Naive thymus-derived CD4-positive, alpha-beta T cell (primary cell): ENCODE measurements at regions of chr4 and their contacts with region 1.

Region 1: DNA sequence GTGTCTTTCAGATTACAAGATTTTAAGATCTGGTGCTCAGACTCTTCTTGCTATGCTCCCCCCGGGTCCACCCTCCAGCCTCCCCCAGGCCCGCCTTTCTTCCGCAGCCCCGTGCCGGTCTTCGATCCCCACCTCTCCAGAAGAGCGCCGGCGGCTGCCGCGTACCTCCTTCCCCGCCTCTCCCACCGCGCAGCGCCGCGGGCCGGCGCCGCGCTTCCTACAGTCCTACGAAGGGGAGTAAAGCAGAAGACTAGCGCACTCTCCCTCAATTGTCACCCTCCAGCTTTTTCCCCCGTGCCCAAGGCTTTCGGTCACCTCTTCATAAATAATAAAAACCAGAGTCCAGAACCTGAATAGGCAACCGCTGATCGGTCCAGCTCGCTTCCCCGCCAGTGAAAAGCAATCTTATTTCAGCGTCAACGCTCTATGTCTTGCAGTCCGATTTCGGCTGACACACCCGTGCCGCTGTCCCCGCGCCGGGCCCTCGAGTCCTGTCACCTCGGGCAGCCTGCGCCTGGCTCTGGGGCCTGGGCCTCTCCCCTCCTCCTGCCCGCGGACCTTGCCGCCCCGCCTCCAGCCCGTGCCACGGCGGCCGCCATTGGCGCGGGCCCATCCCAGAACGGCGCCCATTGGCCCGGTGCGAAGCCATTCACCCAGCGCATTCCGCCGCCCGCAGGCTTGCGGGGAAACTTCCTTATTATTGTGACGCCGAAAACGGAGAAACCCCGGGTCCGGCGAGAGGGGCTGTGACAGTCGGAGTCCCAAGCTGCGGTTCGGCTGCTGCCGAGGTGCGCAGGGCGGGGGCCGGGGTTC is at the start of gene HERC3:
- DNase-seq: peak; percentile 87 to 92 (median 91)
- ATAC-seq: peak; percentile 94
- H3K4me3 ChIP-seq: peak within 1 kb of the TSS; percentile 60
- H3K4me3 Mint-ChIP-seq: peak within 1 kb of the TSS; percentile 94 to 100 (median 98)
- H3K27ac ChIP-seq: peak within 1 kb of the TSS; percentile 93
- H3K27ac Mint-ChIP-seq: peak within 1 kb of the TSS; percentile 83 to 99 (median 97)
- H3K4me1 ChIP-seq: peaks cover 10 to 20% of the 10 kb centered on the region in 2 donors
- H3K4me1 Mint-ChIP-seq: peaks cover 34 to 58% (median 49%) of the 10 kb centered on the region in 7 donors
- H3K27me3 ChIP-seq: no peaks in the 10 kb centered on the region
- H3K27me3 Mint-ChIP-seq: peaks cover 0 to 31% (median 0%) of the 10 kb centered on the region in 5 donors
- total RNA-seq, gene HERC3: 38.1 to 130 (median 104) TPM

Region 2: GRCh38 chr4:87220094-87220822 is 1371.7 kb before region 1 on chr4 and contains the start of gene KLHL8:
- CTCF ChIA-PET with region 1: no interaction called
- POLR2A ChIA-PET with region 1: no interaction called
- intact Hi-C with region 1: loop called in 1 of 2 experiments (anchors 10 kb)
- DNase-seq: peak; percentile 82 to 94 (median 89)
- ATAC-seq: peak; percentile 97
- H3K4me3 ChIP-seq: peak within 1 kb of the TSS; percentile 97
- H3K4me3 Mint-ChIP-seq: peak within 1 kb of the TSS; percentile 73 to 99 (median 94)
- H3K27ac ChIP-seq: peak within 1 kb of the TSS; percentile 92
- H3K27ac Mint-ChIP-seq: peak within 1 kb of the TSS; percentile 71 to 95 (median 91)
- H3K4me1 ChIP-seq: peaks cover 0 to 8% of the 10 kb centered on the region in 2 donors
- H3K4me1 Mint-ChIP-seq: peaks cover 6 to 32% (median 17%) of the 10 kb centered on the region in 7 donors
- H3K27me3 ChIP-seq: no peaks in the 10 kb centered on the region
- H3K27me3 Mint-ChIP-seq: peaks cover 0 to 14% (median 0%) of the 10 kb centered on the region in 5 donors
- total RNA-seq, gene KLHL8: 10.9 to 15.7 (median 11.6) TPM

Region 3: DNA sequence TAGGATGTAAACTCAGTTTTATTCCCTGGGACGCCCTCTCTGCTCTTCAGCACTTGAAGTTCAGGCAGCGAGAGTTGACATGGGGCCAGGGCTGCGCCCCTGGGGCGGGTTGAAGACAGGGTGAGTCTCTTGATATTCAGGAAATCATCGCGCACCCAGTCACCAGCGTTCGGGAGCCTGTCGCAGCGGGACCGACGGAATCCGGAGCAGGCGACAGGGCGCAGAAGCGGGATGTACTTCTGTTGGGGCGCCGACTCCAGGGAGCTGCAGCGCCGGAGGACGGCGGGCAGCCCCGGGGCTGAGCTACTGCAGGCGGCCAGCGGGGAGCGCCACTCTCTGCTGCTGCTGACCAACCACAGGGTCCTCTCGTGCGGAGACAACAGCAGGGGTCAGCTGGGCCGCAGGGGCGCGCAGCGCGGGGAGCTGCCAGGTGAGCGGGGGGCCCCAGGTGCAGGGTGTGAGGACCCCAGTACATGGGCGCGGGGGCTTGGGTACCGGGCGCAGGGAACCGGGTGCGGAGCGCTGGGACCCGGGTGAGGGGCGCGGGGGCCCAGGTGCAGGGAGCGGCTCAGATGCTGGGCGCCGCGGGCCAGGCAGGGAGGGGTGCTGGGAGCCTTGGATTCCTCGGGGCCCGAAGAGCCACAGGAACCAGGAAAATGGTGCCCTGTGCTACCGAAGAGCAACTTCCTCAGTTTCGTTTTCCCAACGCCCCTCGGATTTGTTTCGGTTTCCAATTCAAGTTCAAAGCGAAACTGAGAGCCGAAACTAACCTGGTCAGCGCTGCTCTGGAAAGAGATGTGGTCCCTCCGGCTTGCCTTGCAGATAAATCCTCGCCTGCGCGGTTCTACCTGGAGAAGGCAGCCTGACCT is 213.1 kb before region 1 on chr4 and contains the start of gene HERC6:
- CTCF ChIA-PET with region 1: no interaction called
- POLR2A ChIA-PET with region 1: no interaction called
- intact Hi-C with region 1: loop called (anchors 1 to 5 kb)
- DNase-seq: peak; percentile 49 to 77 (median 70)
- ATAC-seq: peak; percentile 80
- H3K4me3 ChIP-seq: peak within 1 kb of the TSS; percentile 95
- H3K4me3 Mint-ChIP-seq: peak within 1 kb of the TSS; percentile 88 to 98 (median 94)
- H3K27ac ChIP-seq: peak within 1 kb of the TSS; percentile 92
- H3K27ac Mint-ChIP-seq: peak within 1 kb of the TSS; percentile 91 to 99 (median 94)
- H3K4me1 ChIP-seq: peaks cover 21 to 27% of the 10 kb centered on the region in 2 donors
- H3K4me1 Mint-ChIP-seq: peaks cover 24 to 60% (median 46%) of the 10 kb centered on the region in 7 donors
- H3K27me3 ChIP-seq: no peaks in the 10 kb centered on the region
- H3K27me3 Mint-ChIP-seq: no peaks in the 10 kb centered on the region
- total RNA-seq, gene HERC6: 12.6 to 43.5 (median 23.0) TPM

Region 4: DNA sequence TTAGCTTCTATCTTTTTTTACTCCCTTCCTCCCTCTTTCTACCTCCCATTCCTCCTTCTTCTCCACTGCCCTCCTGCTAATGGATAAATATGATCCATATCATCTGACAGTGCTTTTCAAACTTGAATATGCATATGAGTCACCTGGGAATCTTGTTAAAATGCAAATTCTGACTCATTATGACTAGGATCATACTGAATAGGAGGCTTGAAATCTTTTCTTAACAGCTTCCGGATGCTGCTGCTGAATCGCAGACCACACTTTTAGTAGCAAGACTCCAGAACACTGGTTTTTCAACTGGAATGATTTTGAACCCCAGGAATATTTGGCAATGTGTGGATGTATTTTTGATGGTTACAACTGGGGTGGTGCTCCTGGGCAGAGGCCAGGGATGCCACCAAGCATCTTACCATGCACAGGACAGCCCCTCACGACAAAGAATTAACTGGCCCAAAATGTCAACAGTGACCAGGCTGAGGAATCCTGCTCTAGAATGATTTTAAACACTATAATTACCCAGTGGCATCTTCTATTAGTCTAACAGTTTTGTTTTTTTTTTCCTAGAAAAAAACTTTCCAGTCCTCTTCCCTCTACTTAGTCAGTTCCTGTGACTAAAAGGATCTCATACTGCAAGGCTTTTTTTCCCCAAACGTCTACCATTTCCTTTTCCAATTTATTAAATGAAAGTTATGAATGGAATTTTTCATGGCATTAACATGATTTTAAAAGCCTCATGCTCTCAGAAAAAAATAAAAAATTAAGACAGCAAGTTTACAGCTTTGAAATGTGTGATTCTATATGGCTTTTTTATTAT is 57.8 kb before region 1 on chr4:
- CTCF ChIA-PET with region 1: interaction called, 9 read pairs
- POLR2A ChIA-PET with region 1: interaction called, 4 read pairs
- intact Hi-C with region 1: loop called (anchors 1 kb)
- DNase-seq: no peak
- ATAC-seq: no peak
- H3K4me3 ChIP-seq: no peak overlapping the region
- H3K4me3 Mint-ChIP-seq: no peak overlapping the region
- H3K27ac ChIP-seq: no peak overlapping the region
- H3K27ac Mint-ChIP-seq: no peak overlapping the region
- H3K4me1 ChIP-seq: no peaks in the 10 kb centered on the region
- H3K4me1 Mint-ChIP-seq: no peaks in the 10 kb centered on the region
- H3K27me3 ChIP-seq: no peaks in the 10 kb centered on the region
- H3K27me3 Mint-ChIP-seq: no peaks in the 10 kb centered on the region

Region 5: DNA sequence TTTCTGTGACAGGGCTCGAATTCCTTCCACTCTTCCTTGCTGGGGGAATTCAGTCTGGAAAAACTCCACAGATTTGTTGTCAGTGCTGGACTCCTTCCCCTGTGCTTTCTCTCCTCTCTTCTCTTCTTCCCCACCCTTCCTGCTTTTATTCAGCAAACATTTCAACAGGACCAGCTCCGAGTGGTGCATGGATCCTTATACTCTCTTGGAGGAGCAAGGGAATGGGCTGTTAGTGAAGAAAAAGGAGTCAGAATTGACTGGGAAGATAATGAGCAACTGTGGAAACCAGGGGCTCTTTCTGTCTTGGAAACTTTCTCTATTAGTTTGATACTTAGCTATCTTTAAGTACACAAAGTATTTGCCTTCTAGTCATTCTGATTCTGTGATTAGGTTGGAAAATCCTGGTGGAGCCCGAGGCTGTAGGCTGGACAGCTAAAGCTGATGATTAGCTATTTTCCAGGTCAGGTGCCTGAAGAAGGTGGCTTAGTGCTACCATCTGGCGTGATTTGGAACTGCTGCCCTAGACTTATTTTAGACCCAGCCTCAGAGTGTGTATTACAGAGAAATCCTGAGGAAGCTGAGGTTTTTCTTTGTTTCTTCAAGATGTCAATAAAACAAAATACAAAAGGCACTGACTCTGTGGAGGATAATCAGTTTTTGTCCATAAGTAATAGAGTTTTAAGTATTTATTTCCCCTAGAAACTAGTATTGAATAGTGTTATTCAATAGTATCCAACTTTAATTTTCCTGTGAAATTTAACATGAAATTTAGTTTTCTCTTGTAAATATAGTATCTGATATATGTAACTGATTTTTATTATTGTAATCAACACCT is 67.3 kb after region 1 on chr4:
- CTCF ChIA-PET with region 1: interaction called, 7 read pairs
- POLR2A ChIA-PET with region 1: interaction called, 7 read pairs
- intact Hi-C with region 1: loop called (anchors 1 to 2 kb)
- DNase-seq: peak in 7 of 9 donors; percentile 23 to 53 (median 44)
- ATAC-seq: peak; percentile 75
- H3K4me3 ChIP-seq: no peak overlapping the region
- H3K4me3 Mint-ChIP-seq: no peak overlapping the region
- H3K27ac ChIP-seq: no peak overlapping the region
- H3K27ac Mint-ChIP-seq: peak overlapping the region in 6 of 9 donors; percentile 5 to 86 (median 41)
- H3K4me1 ChIP-seq: no peaks in the 10 kb centered on the region
- H3K4me1 Mint-ChIP-seq: peaks cover 8 to 39% (median 24%) of the 10 kb centered on the region in 7 donors
- H3K27me3 ChIP-seq: no peaks in the 10 kb centered on the region
- H3K27me3 Mint-ChIP-seq: no peaks in the 10 kb centered on the region

Region 6: DNA sequence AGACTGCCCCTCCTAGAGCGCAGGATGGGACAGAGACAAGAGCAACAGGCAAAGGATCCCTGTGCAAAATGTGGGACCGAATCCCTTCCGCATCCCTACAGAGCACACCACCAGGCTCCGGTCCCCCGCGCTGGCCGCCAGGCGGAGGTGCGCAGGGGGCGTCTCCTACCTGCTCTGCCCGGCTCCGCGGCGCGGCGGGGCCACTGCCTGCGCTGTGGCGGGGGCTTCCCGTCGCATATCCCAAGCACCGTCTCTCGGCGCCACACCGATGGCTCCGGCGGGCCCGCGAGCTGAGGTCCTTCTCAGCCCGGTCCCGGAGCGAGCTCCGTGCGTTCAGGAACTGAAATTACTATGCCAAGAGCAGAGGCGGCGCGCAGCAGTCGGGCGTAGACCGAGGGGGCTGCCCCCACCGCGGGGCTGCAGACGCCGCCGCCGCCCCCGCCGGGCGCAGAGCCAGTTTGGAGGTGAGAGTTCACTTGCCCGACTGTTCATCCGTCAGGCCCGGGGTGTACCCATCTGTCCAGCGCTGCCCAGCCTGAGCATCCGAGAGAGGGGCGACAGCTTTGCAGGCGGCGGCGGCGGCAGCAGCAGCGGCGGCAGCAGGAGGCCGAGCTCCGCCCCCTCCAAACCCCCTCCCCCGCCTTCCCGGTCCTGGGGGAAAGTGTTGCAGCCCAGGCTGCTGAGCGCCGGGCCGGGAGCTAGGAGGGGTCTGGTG is 715.6 kb after region 1 on chr4 and contains the start of gene GPRIN3:
- CTCF ChIA-PET with region 1: no interaction called
- POLR2A ChIA-PET with region 1: no interaction called
- intact Hi-C with region 1: loop called in 1 of 2 experiments (anchors 10 kb)
- DNase-seq: peak; percentile 54 to 80 (median 66)
- ATAC-seq: peak; percentile 79
- H3K4me3 ChIP-seq: peak within 1 kb of the TSS; percentile 93
- H3K4me3 Mint-ChIP-seq: peak within 1 kb of the TSS; percentile 80 to 99 (median 94)
- H3K27ac ChIP-seq: peak within 1 kb of the TSS; percentile 81
- H3K27ac Mint-ChIP-seq: peak within 1 kb of the TSS; percentile 83 to 98 (median 90)
- H3K4me1 ChIP-seq: peaks cover 18 to 20% of the 10 kb centered on the region in 2 donors
- H3K4me1 Mint-ChIP-seq: peaks cover 39 to 70% (median 64%) of the 10 kb centered on the region in 7 donors
- H3K27me3 ChIP-seq: no peaks in the 10 kb centered on the region
- H3K27me3 Mint-ChIP-seq: no peaks in the 10 kb centered on the region
- total RNA-seq, gene GPRIN3: 10.2 to 55.5 (median 24.8) TPM

Region 7: DNA sequence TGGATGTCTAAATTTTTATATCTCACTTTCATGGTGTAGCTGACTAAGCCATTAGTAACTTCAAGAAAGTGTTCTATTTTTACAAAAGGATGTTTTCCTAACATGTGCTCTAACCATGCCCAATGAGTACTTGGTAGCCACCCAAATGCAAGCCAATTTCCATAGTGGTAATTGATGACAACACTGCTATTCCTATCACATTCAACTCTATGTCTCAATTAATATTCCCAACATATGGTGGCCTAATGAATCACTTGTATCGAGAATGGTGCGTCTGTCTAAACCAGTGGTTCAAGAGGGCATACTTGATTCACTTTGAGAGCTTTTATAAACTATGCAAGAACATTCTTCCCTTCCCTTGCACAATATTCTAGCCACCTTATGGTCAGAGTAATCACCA is 828.5 kb after region 1 on chr4:
- CTCF ChIA-PET with region 1: no interaction called
- POLR2A ChIA-PET with region 1: no interaction called
- intact Hi-C with region 1: no loop called
- DNase-seq: no peak
- ATAC-seq: no peak
- H3K4me3 ChIP-seq: no peak overlapping the region
- H3K4me3 Mint-ChIP-seq: no peak overlapping the region
- H3K27ac ChIP-seq: no peak overlapping the region
- H3K27ac Mint-ChIP-seq: no peak overlapping the region
- H3K4me1 ChIP-seq: no peaks in the 10 kb centered on the region
- H3K4me1 Mint-ChIP-seq: no peaks in the 10 kb centered on the region
- H3K27me3 ChIP-seq: no peaks in the 10 kb centered on the region
- H3K27me3 Mint-ChIP-seq: peaks cover 0 to 3% (median 0%) of the 10 kb centered on the region in 5 donors